ENCODE measurements at regions of chr16 and their contacts with region 1.

Region 1: DNA sequence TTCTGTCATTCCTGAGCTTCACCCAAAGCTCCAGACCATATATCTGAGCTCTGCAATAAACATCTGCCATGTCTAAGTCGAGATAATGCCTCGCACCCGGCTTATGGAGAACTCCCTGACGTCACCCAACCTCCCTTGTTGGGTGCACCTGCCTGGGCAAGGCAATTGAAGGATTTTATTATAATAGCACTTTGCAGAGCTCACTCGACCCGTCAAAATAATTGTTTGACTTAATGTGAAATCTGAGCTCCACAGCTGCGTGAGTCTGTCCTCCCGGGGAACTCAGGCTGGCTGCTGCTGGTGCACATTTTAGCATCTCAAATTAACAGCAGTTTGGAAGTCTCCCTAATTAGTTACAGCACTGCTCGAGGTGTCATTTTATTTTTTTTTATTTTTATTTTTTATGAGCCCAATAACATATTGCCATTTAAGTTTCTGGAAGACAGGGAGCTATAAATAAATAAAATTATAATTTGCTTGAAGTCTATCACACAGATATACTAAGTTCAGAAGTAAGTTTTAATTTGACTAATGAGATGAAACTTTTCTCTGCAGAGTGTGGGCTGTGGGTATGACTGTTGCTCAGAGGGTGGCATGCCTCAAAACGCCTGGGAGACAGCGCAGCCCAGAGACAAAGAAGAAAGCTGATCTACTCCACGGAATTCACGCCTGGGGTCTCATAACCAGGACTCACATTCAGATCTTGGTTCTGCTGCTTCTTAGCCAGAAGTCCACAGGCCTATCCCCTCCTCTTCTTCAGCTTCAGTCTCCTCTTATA is 401.4 kb upstream of the C16orf82 start:
- DNase-seq: peak; percentile 77
- H3K4me3 ChIP-seq: no peak overlapping the region
- H3K27ac ChIP-seq: peak overlapping the region; percentile 68
- H3K4me1 ChIP-seq: peaks cover 43% of the 10 kb centered on the region
- H3K27me3 ChIP-seq: no peaks in the 10 kb centered on the region
- CTCF ChIP-seq: 0 out of 2 replicates have a peak, but pooled peaks have one; percentile 20

Region 2: GRCh38 chr16:24915576-24915975 is 1749.8 kb before region 1 on chr16:
- CTCF ChIA-PET with region 1: no interaction called
- POLR2A ChIA-PET with region 1: interaction called, 11 read pairs
- intact Hi-C with region 1: no loop called
- DNase-seq: no peak
- H3K4me3 ChIP-seq: no peak overlapping the region
- H3K27ac ChIP-seq: no peak overlapping the region
- H3K4me1 ChIP-seq: no peaks in the 10 kb centered on the region
- H3K27me3 ChIP-seq: no peaks in the 10 kb centered on the region
- CTCF ChIP-seq: no peak

Region 3: GRCh38 chr16:26765087-26765486 is 99.7 kb after region 1 on chr16:
- CTCF ChIA-PET with region 1: no interaction called
- POLR2A ChIA-PET with region 1: no interaction called
- intact Hi-C with region 1: no loop called
- DNase-seq: peak; percentile 39
- H3K4me3 ChIP-seq: no peak overlapping the region
- H3K27ac ChIP-seq: no peak overlapping the region
- H3K4me1 ChIP-seq: no peaks in the 10 kb centered on the region
- H3K27me3 ChIP-seq: peaks cover 30% of the 10 kb centered on the region
- CTCF ChIP-seq: peak; percentile 40; the same call in 1 of the 2 replicates

Region 4: GRCh38 chr16:27048315-27048714 is 383.0 kb after region 1 on chr16:
- CTCF ChIA-PET with region 1: no interaction called
- POLR2A ChIA-PET with region 1: no interaction called
- intact Hi-C with region 1: no loop called
- DNase-seq: no peak
- H3K4me3 ChIP-seq: no peak overlapping the region
- H3K27ac ChIP-seq: no peak overlapping the region
- H3K4me1 ChIP-seq: no peaks in the 10 kb centered on the region
- H3K27me3 ChIP-seq: peaks cover 28% of the 10 kb centered on the region
- CTCF ChIP-seq: no peak